ENCODE measurements at regions of chr11 and their contacts with region 1.

Region 1: GRCh38 chr11:12224537-12224893 is 114.1 kb downstream of the MICAL2 start:
- DNase-seq: peak; percentile 98
- H3K4me3 Mint-ChIP-seq: peak overlapping the region; percentile 72
- H3K27ac Mint-ChIP-seq: peak overlapping the region; percentile 96
- H3K4me1 Mint-ChIP-seq: peaks cover 68% of the 10 kb centered on the region
- H3K27me3 Mint-ChIP-seq: no peaks in the 10 kb centered on the region

Region 2: DNA sequence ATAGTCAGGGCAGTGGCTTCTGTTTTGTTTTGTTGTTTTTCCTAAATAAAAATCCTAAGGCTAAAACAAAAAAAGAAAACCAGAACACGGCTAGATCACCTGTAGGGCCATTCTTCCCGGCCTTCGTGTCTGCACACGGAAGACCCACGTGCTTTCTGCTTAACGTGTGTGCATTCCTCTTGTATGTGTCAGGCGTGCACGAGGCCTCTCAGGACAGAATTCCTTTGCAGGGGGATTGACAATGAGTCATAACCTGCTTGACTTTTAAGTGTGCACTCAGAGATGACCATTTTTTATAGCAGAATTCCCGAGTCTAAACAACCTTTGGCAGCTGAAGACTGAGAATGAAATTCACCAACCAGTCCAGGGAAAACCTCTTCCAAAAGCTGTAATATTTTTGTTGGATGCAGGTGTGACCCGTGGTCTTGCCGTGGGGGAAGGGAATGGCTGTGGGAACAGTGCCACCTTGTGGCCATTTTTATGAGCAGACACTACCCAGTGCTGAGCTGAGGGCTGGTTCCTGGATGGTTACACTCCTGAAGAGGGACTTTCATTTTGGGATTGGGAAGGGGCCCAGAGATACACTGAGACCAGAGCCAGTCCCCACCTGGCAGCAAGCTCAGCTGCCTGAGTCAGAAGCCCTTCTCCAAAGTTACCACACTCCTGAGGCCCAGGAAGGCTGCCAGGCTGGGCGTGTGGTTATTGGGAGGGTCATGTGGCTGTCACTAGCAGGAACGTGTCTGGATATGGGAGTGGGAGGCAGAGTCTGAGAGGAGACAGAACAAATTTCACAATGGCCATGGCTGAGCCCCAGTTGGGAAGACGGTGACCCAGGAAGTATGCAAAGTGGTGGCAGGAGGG is 180.3 kb before region 1 on chr11:
- CTCF ChIA-PET with region 1: interaction called, 14 read pairs
- POLR2A ChIA-PET with region 1: no interaction called
- DNase-seq: peak; percentile 72
- H3K4me3 Mint-ChIP-seq: no peak overlapping the region
- H3K27ac Mint-ChIP-seq: no peak overlapping the region
- H3K4me1 Mint-ChIP-seq: peaks cover 9% of the 10 kb centered on the region
- H3K27me3 Mint-ChIP-seq: peaks cover 4% of the 10 kb centered on the region

Region 3: GRCh38 chr11:12075822-12076821 is 148.4 kb before region 1 on chr11:
- CTCF ChIA-PET with region 1: no interaction called
- POLR2A ChIA-PET with region 1: no interaction called
- DNase-seq: no peak
- H3K4me3 Mint-ChIP-seq: no peak overlapping the region
- H3K27ac Mint-ChIP-seq: no peak overlapping the region
- H3K4me1 Mint-ChIP-seq: peaks cover 5% of the 10 kb centered on the region
- H3K27me3 Mint-ChIP-seq: peaks cover 13% of the 10 kb centered on the region

Region 4: GRCh38 chr11:12149672-12150225 is 74.8 kb before region 1 on chr11:
- CTCF ChIA-PET with region 1: interaction called, 5 read pairs
- POLR2A ChIA-PET with region 1: interaction called, 10 read pairs
- DNase-seq: peak; percentile 50
- H3K4me3 Mint-ChIP-seq: no peak overlapping the region
- H3K27ac Mint-ChIP-seq: peak overlapping the region; percentile 88
- H3K4me1 Mint-ChIP-seq: peaks cover 65% of the 10 kb centered on the region
- H3K27me3 Mint-ChIP-seq: no peaks in the 10 kb centered on the region

Region 5: GRCh38 chr11:12174477-12175143 is 49.9 kb before region 1 on chr11:
- CTCF ChIA-PET with region 1: interaction called, 7 read pairs
- POLR2A ChIA-PET with region 1: interaction called, 39 read pairs
- DNase-seq: peak; percentile 26
- H3K4me3 Mint-ChIP-seq: peak overlapping the region; percentile 52
- H3K27ac Mint-ChIP-seq: peak overlapping the region; percentile 99
- H3K4me1 Mint-ChIP-seq: peaks cover 78% of the 10 kb centered on the region
- H3K27me3 Mint-ChIP-seq: no peaks in the 10 kb centered on the region

Region 6: DNA sequence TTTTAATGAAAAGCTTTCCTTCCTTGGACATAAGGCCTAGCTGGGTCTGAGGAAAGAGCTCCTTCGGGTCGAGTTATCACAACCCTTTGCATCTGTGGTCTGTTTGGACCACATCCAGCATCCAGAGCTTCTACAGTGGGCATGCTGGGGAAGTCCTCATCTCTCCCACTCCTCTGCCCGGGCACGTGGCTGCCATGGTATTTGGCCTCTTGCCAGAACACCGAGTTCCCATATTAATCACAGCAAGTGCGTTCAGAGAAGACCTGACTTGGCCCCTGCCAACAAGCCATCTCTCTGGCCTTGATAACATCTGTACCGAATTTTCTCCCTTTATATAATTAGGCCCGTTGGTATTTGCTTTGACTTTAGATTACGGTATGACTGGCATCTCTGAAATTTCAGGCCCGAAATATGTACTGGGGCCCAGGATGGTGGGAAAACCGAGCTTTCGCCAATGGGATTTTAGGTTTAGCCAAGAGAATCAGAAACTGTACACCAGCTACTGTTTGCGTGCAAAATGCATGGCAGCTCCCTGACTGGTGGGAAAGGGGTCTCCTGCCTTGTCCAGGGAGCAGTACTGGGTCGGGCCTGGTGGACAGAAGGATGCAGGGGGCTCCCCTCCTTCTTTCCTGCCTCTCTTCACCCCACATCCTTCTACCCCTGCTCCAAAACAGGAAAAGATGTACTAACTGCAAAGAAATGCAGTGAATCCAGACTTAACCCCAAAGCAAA is 24.1 kb before region 1 on chr11:
- CTCF ChIA-PET with region 1: interaction called, 20 read pairs
- POLR2A ChIA-PET with region 1: interaction called, 134 read pairs
- DNase-seq: no peak
- H3K4me3 Mint-ChIP-seq: no peak overlapping the region
- H3K27ac Mint-ChIP-seq: peak overlapping the region; percentile 98
- H3K4me1 Mint-ChIP-seq: peaks cover 75% of the 10 kb centered on the region
- H3K27me3 Mint-ChIP-seq: no peaks in the 10 kb centered on the region

Measured in activated CD4-positive, alpha-beta memory T cell treated with anti-CD3 and anti-CD28 coated beads, Interleukin-2, amount 10 ng/mL, durations not matched to agents 7 days and 5 days (primary cell).